ENCODE measurements at regions of chr14 and their contacts with region 1.

Region 1: DNA sequence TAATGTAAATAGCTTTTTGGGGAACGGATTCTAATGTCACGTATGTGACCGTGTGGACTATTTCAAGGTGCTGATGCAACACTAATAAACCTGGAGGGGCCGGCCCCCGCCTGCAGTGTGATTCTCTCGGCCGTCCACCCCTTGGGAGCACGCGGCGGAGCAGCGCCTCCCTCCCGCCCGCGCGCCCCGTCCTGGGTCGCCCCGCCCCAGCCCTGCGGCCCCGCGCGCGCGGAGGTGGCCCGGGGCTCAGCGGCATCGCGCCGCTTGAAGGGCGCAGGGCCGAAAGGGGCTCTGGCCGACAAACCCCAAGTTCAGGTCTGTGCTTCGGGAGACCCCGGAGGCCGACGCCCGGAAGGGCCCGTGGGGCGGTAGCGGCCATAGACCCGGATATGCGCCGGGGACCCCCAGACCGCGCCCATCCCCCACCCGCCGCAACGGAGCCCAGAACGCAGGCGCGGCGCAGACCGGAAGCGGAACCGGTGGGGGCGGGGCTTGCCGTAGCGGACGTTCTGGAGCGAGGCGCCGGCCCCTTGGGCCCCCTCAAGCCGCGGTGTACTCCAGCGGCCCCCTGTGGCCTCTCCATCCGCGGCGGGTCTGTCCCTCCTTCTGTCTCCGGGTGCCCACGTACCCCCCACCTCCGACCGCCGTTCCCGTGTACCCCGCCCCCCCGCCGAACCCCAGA is at the start of gene TEX22:
- DNase-seq: peak; percentile 96
- ATAC-seq: peak; percentile 94
- H3K4me3 ChIP-seq: peak within 1 kb of the TSS; percentile 89
- H3K27ac ChIP-seq: peak within 1 kb of the TSS; percentile 86
- H3K4me1 ChIP-seq: peaks cover 6% of the 10 kb centered on the region
- H3K27me3 ChIP-seq: no peaks in the 10 kb centered on the region
- CTCF ChIP-seq: peak; percentile 37
- total RNA-seq, gene TEX22: 3.2 TPM

Region 2: GRCh38 chr14:105490572-105491366 is 92.6 kb after region 1 on chr14 and contains the start of gene TEDC1:
- intact Hi-C with region 1: loop called (anchors 10 kb)
- DNase-seq: peak; percentile 100
- ATAC-seq: peak; percentile 86
- H3K4me3 ChIP-seq: peak within 1 kb of the TSS; percentile 77
- H3K27ac ChIP-seq: peak within 1 kb of the TSS; percentile 91
- H3K4me1 ChIP-seq: peaks cover 30% of the 10 kb centered on the region
- H3K27me3 ChIP-seq: no peaks in the 10 kb centered on the region
- CTCF ChIP-seq: peak; percentile 69
- total RNA-seq, gene TEDC1: 7.9 TPM

Measured in upper lobe of right lung (tissue), 1 donor.